ENCODE measurements at regions of chr17 and their contacts with region 1.

Region 1: DNA sequence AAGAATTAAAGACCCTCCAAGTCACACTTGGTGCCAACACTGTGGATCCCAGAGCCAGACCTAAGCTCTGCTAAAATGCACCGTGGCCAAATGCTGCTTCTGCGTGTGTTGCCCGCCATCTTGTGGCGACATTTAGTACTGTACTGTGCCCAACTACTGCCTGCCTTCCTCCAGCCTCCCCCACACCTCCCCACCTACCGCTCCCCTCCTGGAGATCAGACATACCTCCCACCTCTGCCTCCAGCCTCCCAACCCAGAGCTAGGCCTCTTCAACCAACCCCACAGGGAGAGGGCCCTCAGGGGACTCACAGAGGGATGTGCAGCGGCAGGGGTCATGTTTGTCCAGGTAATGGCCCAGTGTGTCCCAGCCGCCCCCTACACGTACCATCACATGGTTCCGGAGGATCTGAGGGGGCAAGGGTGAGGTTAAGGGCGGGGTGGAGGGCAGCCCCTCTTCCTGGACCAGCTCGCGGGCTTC is 5.5 kb downstream of the GAS2L2 start:
- DNase-seq: peak in 1 of 2 donors; percentile 82
- H3K4me3 ChIP-seq: no peak overlapping the region
- H3K27ac ChIP-seq: no peak overlapping the region
- H3K4me1 ChIP-seq: peaks cover 0 to 5% of the 10 kb centered on the region in 2 donors
- H3K27me3 ChIP-seq: peaks cover 5% of the 10 kb centered on the region
- CTCF ChIP-seq: peak; percentile 90 to 92 (median 91)

Region 2: GRCh38 chr17:35519439-35519838 is 228.1 kb before region 1 on chr17:
- intact Hi-C with region 1: no loop called
- DNase-seq: no peak
- H3K4me3 ChIP-seq: no peak overlapping the region
- H3K27ac ChIP-seq: no peak overlapping the region
- H3K4me1 ChIP-seq: no peaks in the 10 kb centered on the region
- H3K27me3 ChIP-seq: no peaks in the 10 kb centered on the region
- CTCF ChIP-seq: no peak

Region 3: GRCh38 chr17:35612924-35613521 is 134.6 kb before region 1 on chr17:
- intact Hi-C with region 1: loop called (anchors 2 kb)
- DNase-seq: no peak
- H3K4me3 ChIP-seq: no peak overlapping the region
- H3K27ac ChIP-seq: no peak overlapping the region
- H3K4me1 ChIP-seq: no peaks in the 10 kb centered on the region
- H3K27me3 ChIP-seq: no peaks in the 10 kb centered on the region
- CTCF ChIP-seq: peak; percentile 31 to 59 (median 40)

Region 4: GRCh38 chr17:35660902-35661301 is 86.7 kb before region 1 on chr17:
- intact Hi-C with region 1: loop called (anchors 5 kb)
- DNase-seq: no peak
- H3K4me3 ChIP-seq: no peak overlapping the region
- H3K27ac ChIP-seq: no peak overlapping the region
- H3K4me1 ChIP-seq: no peaks in the 10 kb centered on the region
- H3K27me3 ChIP-seq: no peaks in the 10 kb centered on the region
- CTCF ChIP-seq: peak in 1 of 3 experiments; percentile 17

Region 5: GRCh38 chr17:35709874-35710273 is 37.7 kb before region 1 on chr17:
- intact Hi-C with region 1: no loop called
- DNase-seq: no peak
- H3K4me3 ChIP-seq: no peak overlapping the region
- H3K27ac ChIP-seq: no peak overlapping the region
- H3K4me1 ChIP-seq: peaks cover 8 to 19% of the 10 kb centered on the region in 2 donors
- H3K27me3 ChIP-seq: no peaks in the 10 kb centered on the region
- CTCF ChIP-seq: no peak

Region 6: DNA sequence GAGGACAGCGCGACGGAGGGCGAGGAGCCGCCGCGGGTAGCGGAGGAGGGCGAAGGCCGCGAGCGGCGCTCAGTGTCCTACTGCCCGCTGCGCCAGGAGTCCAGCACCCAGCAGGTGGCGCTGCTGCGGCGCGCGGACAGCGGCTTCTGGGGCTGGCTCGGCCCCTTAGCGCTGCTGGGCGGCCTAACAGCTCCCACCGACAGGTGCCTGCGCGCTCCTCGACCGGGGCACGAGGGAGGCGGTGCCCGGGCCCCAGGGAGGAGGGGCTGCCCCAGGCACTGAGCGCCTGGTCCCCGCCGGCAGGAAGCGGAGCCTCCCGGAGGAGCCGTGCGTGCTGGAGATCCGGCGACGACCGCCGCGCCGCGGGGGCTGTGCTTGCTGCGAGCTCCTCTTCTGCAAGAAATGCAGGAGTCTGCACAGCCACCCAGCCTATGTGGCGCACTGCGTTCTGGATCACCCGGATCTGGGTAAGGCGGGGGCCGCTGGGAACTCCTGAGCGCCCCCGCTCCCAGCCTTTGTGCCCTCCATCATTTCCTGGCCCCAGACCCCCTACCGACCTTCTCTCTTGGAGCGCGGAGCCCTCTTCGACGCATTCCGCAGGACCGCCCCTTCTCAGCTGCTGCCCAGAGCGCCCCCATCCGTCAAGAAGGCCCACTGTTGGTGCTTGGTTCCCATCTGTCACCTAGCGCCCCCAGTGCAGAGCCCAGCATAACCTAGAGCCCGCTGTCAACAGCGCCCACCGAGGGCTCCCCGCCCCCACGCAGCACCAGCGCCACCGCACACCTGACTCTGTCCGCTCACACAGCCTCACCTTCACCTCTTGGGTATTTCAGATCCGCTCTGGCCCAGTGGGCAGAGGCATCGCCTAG is 16.8 kb after region 1 on chr17:
- intact Hi-C with region 1: no loop called
- DNase-seq: peak; percentile 23 to 91
- H3K4me3 ChIP-seq: peak overlapping the region; percentile 28 to 70
- H3K27ac ChIP-seq: peak overlapping the region in 1 of 2 donors; percentile 40
- H3K4me1 ChIP-seq: peaks cover 2 to 10% of the 10 kb centered on the region in 2 donors
- H3K27me3 ChIP-seq: no peaks in the 10 kb centered on the region
- CTCF ChIP-seq: peak; percentile 91 to 98 (median 97)

Region 7: GRCh38 chr17:35879773-35880654 is 132.4 kb after region 1 on chr17 and contains the start of gene CCL5:
- intact Hi-C with region 1: no loop called
- DNase-seq: no peak
- H3K4me3 ChIP-seq: peak within 1 kb of the TSS in 1 of 2 donors; percentile 27
- H3K27ac ChIP-seq: no peak within 1 kb of the TSS
- H3K4me1 ChIP-seq: no peaks in the 10 kb centered on the region
- H3K27me3 ChIP-seq: no peaks in the 10 kb centered on the region
- CTCF ChIP-seq: no peak
- total RNA-seq, gene CCL5: 43.2 TPM

Measured in ascending aorta (tissue), 2 donors.